OCI-LY7 (cell line): ENCODE measurements at regions of chr21 and their contacts with region 1.

Region 1: GRCh38 chr21:43667191-43667904 is 8.0 kb downstream of the RRP1B start:
- DNase-seq: no peak
- H3K4me3 ChIP-seq: no peak overlapping the region
- H3K27ac ChIP-seq: no peak overlapping the region
- H3K4me1 ChIP-seq: peaks cover under 1% of the 10 kb centered on the region
- CTCF ChIP-seq: no peak

Region 2: DNA sequence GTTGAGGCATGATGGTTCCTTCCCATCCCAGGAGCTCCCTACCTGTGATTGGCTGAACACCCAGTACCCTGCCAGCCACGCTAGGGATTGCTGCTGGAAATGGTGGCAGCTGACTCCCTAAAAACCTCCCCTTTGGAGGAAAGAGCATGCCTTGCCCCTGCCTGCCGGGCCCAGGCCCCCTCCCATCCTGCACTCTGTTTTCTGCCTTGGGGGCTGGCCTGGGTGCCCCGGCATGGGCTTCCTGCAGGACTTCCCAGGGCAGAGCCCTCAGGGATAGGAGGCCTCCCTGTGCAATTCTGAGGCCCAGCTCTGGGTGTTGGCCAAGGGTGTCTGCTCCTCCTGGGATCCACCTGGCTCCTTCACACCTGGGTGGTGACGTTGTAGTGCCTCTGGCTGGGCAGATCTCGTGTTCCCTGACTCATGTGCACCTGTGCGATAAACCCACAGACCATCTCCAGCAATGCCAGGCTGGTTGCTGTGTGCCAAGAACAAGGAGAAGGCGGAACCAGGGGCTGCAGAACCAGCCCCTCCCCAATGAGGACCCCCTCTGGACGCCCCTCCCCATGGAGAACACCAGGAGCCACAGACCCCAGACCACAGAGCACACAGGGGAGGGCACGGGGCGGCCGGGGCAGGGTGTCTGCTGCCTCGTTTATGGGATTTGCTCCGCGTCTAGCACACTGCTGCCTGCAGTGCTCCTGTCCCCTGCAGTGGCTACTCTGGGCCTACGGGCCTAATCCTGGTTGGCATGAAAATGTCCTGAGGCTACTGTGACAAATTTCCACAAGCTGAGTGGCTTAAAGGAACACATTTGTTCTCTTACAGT is 95.2 kb after region 1 on chr21:
- CTCF ChIA-PET with region 1: no interaction called
- POLR2A ChIA-PET with region 1: no interaction called
- intact Hi-C with region 1: no loop called
- DNase-seq: no peak
- H3K4me3 ChIP-seq: no peak overlapping the region
- H3K27ac ChIP-seq: no peak overlapping the region
- H3K4me1 ChIP-seq: no peaks in the 10 kb centered on the region
- CTCF ChIP-seq: no peak

Region 3: GRCh38 chr21:43775795-43776430 is 108.6 kb after region 1 on chr21 and contains the start of gene CSTB:
- CTCF ChIA-PET with region 1: no interaction called
- POLR2A ChIA-PET with region 1: interaction called, 3 read pairs
- intact Hi-C with region 1: loop called (anchors 10 kb)
- DNase-seq: peak; percentile 80
- H3K4me3 ChIP-seq: peak within 1 kb of the TSS; percentile 90
- H3K27ac ChIP-seq: peak within 1 kb of the TSS; percentile 48
- H3K4me1 ChIP-seq: peaks cover 27% of the 10 kb centered on the region
- CTCF ChIP-seq: peak; percentile 35; the same call in 1 of the 2 replicates
- total RNA-seq, gene CSTB: 12.5 and 15.6 TPM in 2 replicates